ENCODE measurements at regions of chr18 and their contacts with region 1.

Region 1: DNA sequence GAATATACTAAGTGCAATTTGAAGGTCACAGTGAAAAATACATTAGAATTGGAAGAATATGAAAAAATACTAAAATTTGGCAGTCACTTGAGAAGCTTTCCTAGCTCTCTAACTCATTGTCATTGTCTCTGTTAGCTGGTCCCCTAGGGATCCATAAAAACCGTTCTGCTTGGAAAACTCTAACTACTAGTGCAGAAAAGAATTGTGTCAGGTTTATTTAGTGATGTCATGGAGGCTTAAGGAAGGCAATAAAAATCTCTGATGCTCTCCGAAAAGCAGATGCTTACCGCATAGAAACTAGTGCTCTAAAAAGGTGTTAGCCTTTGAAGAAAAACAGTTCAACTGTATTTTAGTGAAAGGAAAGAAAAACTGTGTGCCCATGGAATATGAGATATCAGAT is 150.1 kb upstream of the DLGAP1 start:
- DNase-seq: no peak
- ATAC-seq: no peak
- H3K4me3 ChIP-seq: no peak overlapping the region
- H3K4me1 ChIP-seq: no peaks in the 10 kb centered on the region
- CTCF ChIP-seq: no peak

Region 2: GRCh38 chr18:4352746-4353551 is 252.3 kb before region 1 on chr18:
- intact Hi-C with region 1: no loop called
- DNase-seq: no peak
- ATAC-seq: no peak
- H3K4me3 ChIP-seq: no peak overlapping the region
- H3K4me1 ChIP-seq: no peaks in the 10 kb centered on the region
- CTCF ChIP-seq: no peak

Region 3: DNA sequence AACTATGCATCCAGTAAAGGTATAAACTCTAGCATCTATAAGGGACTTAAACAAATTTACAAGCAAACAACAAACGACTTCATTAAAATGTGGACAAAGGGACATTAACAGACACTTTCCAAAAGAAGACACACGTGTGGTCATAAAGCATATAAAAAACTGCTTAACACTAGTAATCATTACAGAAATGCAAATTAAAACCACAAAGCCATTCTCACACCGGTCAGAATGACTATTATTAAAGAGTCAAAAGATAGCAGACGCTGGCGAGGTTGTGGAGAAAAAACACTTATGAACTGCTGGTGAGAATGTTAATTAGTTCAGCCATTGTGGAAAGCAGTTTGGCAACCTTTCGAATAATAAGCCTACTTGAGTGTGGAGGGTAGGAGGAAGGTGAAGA is 66.9 kb after region 1 on chr18:
- intact Hi-C with region 1: loop called in 1 of 2 experiments (anchors 10 kb)
- DNase-seq: no peak
- ATAC-seq: no peak
- H3K4me3 ChIP-seq: no peak overlapping the region
- H3K4me1 ChIP-seq: no peaks in the 10 kb centered on the region
- CTCF ChIP-seq: no peak

Region 4: GRCh38 chr18:4797002-4797685 is 191.9 kb after region 1 on chr18:
- intact Hi-C with region 1: no loop called
- DNase-seq: no peak
- ATAC-seq: no peak
- H3K4me3 ChIP-seq: no peak overlapping the region
- H3K4me1 ChIP-seq: no peaks in the 10 kb centered on the region
- CTCF ChIP-seq: no peak

Measured in mucosa of descending colon (tissue), 3 donors.